Naive thymus-derived CD4-positive, alpha-beta T cell (primary cell): ENCODE measurements at regions of chr6 and their contacts with region 1.

Region 1: GRCh38 chr6:43013843-43014433 is at the starts of genes KLHDC3 and MEA1:
- DNase-seq: peak; percentile 83 to 100 (median 99)
- ATAC-seq: peak; percentile 98
- H3K4me3 ChIP-seq: peak within 1 kb of the TSS; percentile 73
- H3K4me3 Mint-ChIP-seq: peak within 1 kb of the TSS; percentile 85 to 99 (median 92)
- H3K27ac ChIP-seq: peak within 1 kb of the TSS; percentile 84
- H3K27ac Mint-ChIP-seq: peak within 1 kb of the TSS; percentile 82 to 97 (median 92)
- H3K4me1 ChIP-seq: peaks cover 20 to 31% of the 10 kb centered on the region in 2 donors
- H3K4me1 Mint-ChIP-seq: peaks cover 45 to 78% (median 58%) of the 10 kb centered on the region in 7 donors
- H3K27me3 ChIP-seq: no peaks in the 10 kb centered on the region
- H3K27me3 Mint-ChIP-seq: peaks cover 0 to 3% (median 0%) of the 10 kb centered on the region in 5 donors
- total RNA-seq, gene KLHDC3: 39.9 to 76.9 (median 67.4) TPM
- total RNA-seq, gene MEA1: 20.3 to 58.0 (median 32.7) TPM

Region 2: GRCh38 chr6:42771741-42772100 is 242.2 kb before region 1 on chr6:
- CTCF ChIA-PET with region 1: interaction called, 3 read pairs
- POLR2A ChIA-PET with region 1: no interaction called
- intact Hi-C with region 1: loop called in 1 of 2 experiments (anchors 5 kb)
- DNase-seq: peak in 1 of 9 donors; percentile 63
- ATAC-seq: peak; percentile 35
- H3K4me3 ChIP-seq: peak overlapping the region; percentile 50
- H3K4me3 Mint-ChIP-seq: peak overlapping the region; percentile 67 to 91 (median 84)
- H3K27ac ChIP-seq: peak overlapping the region; percentile 91
- H3K27ac Mint-ChIP-seq: peak overlapping the region; percentile 99 to 100 (median 100)
- H3K4me1 ChIP-seq: peaks cover 67 to 72% of the 10 kb centered on the region in 2 donors
- H3K4me1 Mint-ChIP-seq: peaks cover 49 to 86% (median 75%) of the 10 kb centered on the region in 7 donors
- H3K27me3 ChIP-seq: no peaks in the 10 kb centered on the region
- H3K27me3 Mint-ChIP-seq: no peaks in the 10 kb centered on the region

Region 3: GRCh38 chr6:42984001-42984923 is 29.7 kb before region 1 on chr6 and contains the start of gene PPP2R5D:
- CTCF ChIA-PET with region 1: no interaction called
- POLR2A ChIA-PET with region 1: interaction called, 70 read pairs
- intact Hi-C with region 1: loop called (anchors 1 kb)
- DNase-seq: peak; percentile 81 to 98 (median 97)
- ATAC-seq: peak; percentile 97
- H3K4me3 ChIP-seq: peak within 1 kb of the TSS; percentile 64
- H3K4me3 Mint-ChIP-seq: peak within 1 kb of the TSS; percentile 87 to 99 (median 94)
- H3K27ac ChIP-seq: peak within 1 kb of the TSS; percentile 95
- H3K27ac Mint-ChIP-seq: peak within 1 kb of the TSS; percentile 89 to 99 (median 95)
- H3K4me1 ChIP-seq: peaks cover 28 to 40% of the 10 kb centered on the region in 2 donors
- H3K4me1 Mint-ChIP-seq: peaks cover 46 to 71% (median 68%) of the 10 kb centered on the region in 7 donors
- H3K27me3 ChIP-seq: no peaks in the 10 kb centered on the region
- H3K27me3 Mint-ChIP-seq: no peaks in the 10 kb centered on the region
- total RNA-seq, gene PPP2R5D: 19.7 to 60.4 (median 28.2) TPM

Region 4: DNA sequence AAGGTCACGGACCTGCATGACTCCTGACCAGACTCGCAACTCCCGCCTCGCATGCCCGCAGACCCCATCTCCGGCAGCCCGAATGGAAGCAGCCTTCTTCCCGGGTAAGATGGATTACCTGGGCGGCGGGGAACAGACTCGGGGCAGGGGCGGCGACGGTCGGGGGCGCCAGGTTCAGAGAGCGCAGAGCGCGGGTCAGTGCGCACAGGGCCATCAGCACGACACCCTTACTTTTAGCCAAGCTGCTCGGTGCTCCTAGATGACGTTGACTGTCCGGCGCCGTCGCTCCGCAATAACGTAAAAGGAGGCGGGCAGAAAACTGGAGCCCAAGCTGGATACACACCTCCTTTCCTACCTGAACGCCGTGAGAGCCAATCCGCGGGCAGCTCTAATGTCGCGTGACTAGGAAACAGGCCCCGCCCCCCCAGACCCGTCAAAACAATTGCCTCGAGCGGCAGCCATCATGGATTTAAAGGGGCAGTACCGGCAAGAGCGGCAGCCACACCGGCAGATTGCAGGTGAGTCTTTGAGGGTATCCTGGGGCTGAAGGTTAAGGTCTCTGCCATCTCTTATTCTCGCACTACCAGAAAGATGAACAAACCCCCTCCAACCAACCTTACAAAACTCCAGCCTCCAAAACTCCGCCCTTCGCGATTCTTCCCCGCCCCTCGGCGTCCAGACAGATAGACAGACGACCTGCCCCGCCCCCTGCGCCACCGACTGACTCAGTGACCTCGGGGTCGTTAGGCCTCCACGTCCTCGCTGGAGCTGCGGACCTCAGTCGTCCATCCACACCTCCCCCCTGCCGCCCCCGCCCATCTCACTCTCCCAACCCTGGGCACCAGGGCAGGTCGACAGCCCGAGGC is 45.5 kb after region 1 on chr6 and contains the starts of genes KLC4 and MRPL2:
- CTCF ChIA-PET with region 1: interaction called, 5 read pairs
- POLR2A ChIA-PET with region 1: interaction called, 37 read pairs
- intact Hi-C with region 1: loop called (anchors 1 kb)
- DNase-seq: peak; percentile 79 to 98 (median 95)
- ATAC-seq: peak; percentile 99
- H3K4me3 ChIP-seq: peak within 1 kb of the TSS; percentile 80
- H3K4me3 Mint-ChIP-seq: peak within 1 kb of the TSS; percentile 88 to 100 (median 96)
- H3K27ac ChIP-seq: peak within 1 kb of the TSS; percentile 88
- H3K27ac Mint-ChIP-seq: peak within 1 kb of the TSS; percentile 95 to 100 (median 99)
- H3K4me1 ChIP-seq: peaks cover 0 to 21% of the 10 kb centered on the region in 2 donors
- H3K4me1 Mint-ChIP-seq: peaks cover 28 to 50% (median 45%) of the 10 kb centered on the region in 7 donors
- H3K27me3 ChIP-seq: no peaks in the 10 kb centered on the region
- H3K27me3 Mint-ChIP-seq: no peaks in the 10 kb centered on the region
- total RNA-seq, gene KLC4: 16.5 to 56.9 (median 42.5) TPM
- total RNA-seq, gene MRPL2: 32.0 to 57.5 (median 47.7) TPM

Region 5: GRCh38 chr6:43129434-43130194 is 115.7 kb after region 1 on chr6:
- CTCF ChIA-PET with region 1: no interaction called
- POLR2A ChIA-PET with region 1: no interaction called
- intact Hi-C with region 1: no loop called
- DNase-seq: peak in 1 of 9 donors; percentile 10
- ATAC-seq: peak; percentile 61
- H3K4me3 ChIP-seq: no peak overlapping the region
- H3K4me3 Mint-ChIP-seq: no peak overlapping the region
- H3K27ac ChIP-seq: no peak overlapping the region
- H3K27ac Mint-ChIP-seq: no peak overlapping the region
- H3K4me1 ChIP-seq: no peaks in the 10 kb centered on the region
- H3K4me1 Mint-ChIP-seq: no peaks in the 10 kb centered on the region
- H3K27me3 ChIP-seq: no peaks in the 10 kb centered on the region
- H3K27me3 Mint-ChIP-seq: no peaks in the 10 kb centered on the region

Region 6: GRCh38 chr6:43247113-43247999 is 233.4 kb after region 1 on chr6:
- CTCF ChIA-PET with region 1: no interaction called
- POLR2A ChIA-PET with region 1: no interaction called
- intact Hi-C with region 1: loop called in 1 of 2 experiments (anchors 1 kb)
- DNase-seq: peak; percentile 65 to 81 (median 78)
- ATAC-seq: peak; percentile 95
- H3K4me3 ChIP-seq: peak overlapping the region; percentile 84
- H3K4me3 Mint-ChIP-seq: peak overlapping the region in 9 of 10 donors; percentile 83 to 94 (median 88)
- H3K27ac ChIP-seq: peak overlapping the region; percentile 78
- H3K27ac Mint-ChIP-seq: peak overlapping the region; percentile 76 to 92 (median 89)
- H3K4me1 ChIP-seq: peaks cover 3 to 13% of the 10 kb centered on the region in 2 donors
- H3K4me1 Mint-ChIP-seq: peaks cover 11 to 26% (median 21%) of the 10 kb centered on the region in 7 donors
- H3K27me3 ChIP-seq: peaks cover 3 to 13% of the 10 kb centered on the region in 2 donors
- H3K27me3 Mint-ChIP-seq: peaks cover 7 to 33% (median 14%) of the 10 kb centered on the region in 5 donors

Region 7: GRCh38 chr6:43575772-43576551 is 562.0 kb after region 1 on chr6 and contains the starts of genes POLH and XPO5:
- CTCF ChIA-PET with region 1: no interaction called
- POLR2A ChIA-PET with region 1: no interaction called
- intact Hi-C with region 1: loop called in 1 of 2 experiments (anchors 5 kb)
- DNase-seq: peak; percentile 83 to 94 (median 88)
- ATAC-seq: peak; percentile 99
- H3K4me3 ChIP-seq: peak within 1 kb of the TSS; percentile 77
- H3K4me3 Mint-ChIP-seq: peak within 1 kb of the TSS; percentile 90 to 100 (median 98)
- H3K27ac ChIP-seq: peak within 1 kb of the TSS; percentile 89
- H3K27ac Mint-ChIP-seq: peak within 1 kb of the TSS; percentile 78 to 94 (median 92)
- H3K4me1 ChIP-seq: peaks cover 20 to 21% of the 10 kb centered on the region in 2 donors
- H3K4me1 Mint-ChIP-seq: peaks cover 21 to 61% (median 40%) of the 10 kb centered on the region in 7 donors
- H3K27me3 ChIP-seq: no peaks in the 10 kb centered on the region
- H3K27me3 Mint-ChIP-seq: no peaks in the 10 kb centered on the region
- total RNA-seq, gene POLH: 9.1 to 65.6 (median 19.3) TPM
- total RNA-seq, gene XPO5: 35.0 to 107 (median 41.9) TPM